Ovary (tissue), 10 donors: ENCODE measurements at regions of chr3 and their contacts with region 1.

Region 1: GRCh38 chr3:63980835-63981498 is 42.3 kb downstream of the PSMD6 start:
- DNase-seq: no peak
- H3K4me3 ChIP-seq: no peak overlapping the region
- H3K27ac ChIP-seq: no peak overlapping the region
- H3K4me1 ChIP-seq: peaks cover 2% of the 10 kb centered on the region
- H3K27me3 ChIP-seq: no peaks in the 10 kb centered on the region
- CTCF ChIP-seq: no peak
- EP300 ChIP-seq: no peak
- POLR2A ChIP-seq: no peak

Region 2: DNA sequence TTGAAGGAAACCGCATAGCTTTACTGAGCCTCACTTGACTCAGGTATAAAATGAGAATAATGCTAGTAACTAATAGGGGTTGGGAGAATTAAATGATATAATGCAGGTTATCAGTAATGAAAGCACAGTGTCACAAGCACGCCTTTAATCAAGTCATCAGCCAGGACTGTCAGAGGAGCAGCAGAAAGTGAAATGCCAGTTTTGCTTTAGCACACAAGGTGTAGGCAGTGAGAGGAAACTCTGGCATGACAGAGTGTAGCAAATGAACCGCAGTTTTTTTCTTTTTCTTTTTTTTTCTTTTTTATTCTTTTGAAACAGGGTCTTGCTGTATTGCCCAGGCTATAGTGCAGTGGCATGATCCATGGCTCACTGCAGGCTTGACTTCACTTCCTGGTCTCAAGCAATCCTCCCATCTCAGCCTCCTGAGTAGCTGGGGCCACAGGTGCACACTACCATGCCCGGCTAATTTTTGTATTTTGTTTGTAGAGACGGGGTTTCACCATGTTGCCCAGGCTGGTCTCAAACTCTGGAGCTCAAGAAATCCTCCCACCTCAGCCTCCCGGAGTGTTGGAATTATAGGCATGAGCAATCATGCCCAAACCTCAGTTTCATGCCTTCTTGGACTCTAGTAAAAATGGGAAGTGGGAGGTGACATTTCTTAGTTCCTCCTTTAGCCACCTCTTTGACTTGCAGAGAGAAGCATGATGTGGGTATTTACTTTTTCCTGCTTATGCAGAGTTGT is 59.1 kb before region 1 on chr3:
- intact Hi-C with region 1: loop called in 1 of 4 experiments (anchors 10 kb)
- DNase-seq: no peak
- H3K4me3 ChIP-seq: no peak overlapping the region
- H3K27ac ChIP-seq: no peak overlapping the region
- H3K4me1 ChIP-seq: peaks cover 8% of the 10 kb centered on the region
- H3K27me3 ChIP-seq: no peaks in the 10 kb centered on the region
- CTCF ChIP-seq: no peak
- EP300 ChIP-seq: no peak
- POLR2A ChIP-seq: no peak